Thyroid gland (tissue), 4 donors: ENCODE measurements at regions of chr16 and their contacts with region 1.

Region 1: GRCh38 chr16:51151961-51152663 is 1.0 kb upstream of the SALL1 start:
- DNase-seq: peak; percentile 93 to 95
- H3K4me3 ChIP-seq: peak overlapping the region; percentile 54 to 93 (median 90)
- H3K27ac ChIP-seq: peak overlapping the region; percentile 99
- H3K4me1 ChIP-seq: peaks cover under 1 to 2% of the 10 kb centered on the region in 2 donors
- H3K27me3 ChIP-seq: no peaks in the 10 kb centered on the region
- CTCF ChIP-seq: no peak
- POLR2A ChIP-seq: peak; percentile 51 to 98

Region 2: GRCh38 chr16:51756447-51757123 is 604.5 kb after region 1 on chr16:
- intact Hi-C with region 1: loop called (anchors 5 kb)
- DNase-seq: peak; percentile 48 to 53
- H3K4me3 ChIP-seq: peak overlapping the region in 1 of 3 donors; percentile 13
- H3K27ac ChIP-seq: peak overlapping the region; percentile 88 to 93 (median 90)
- H3K4me1 ChIP-seq: peaks cover 19 to 34% of the 10 kb centered on the region in 2 donors
- H3K27me3 ChIP-seq: no peaks in the 10 kb centered on the region
- CTCF ChIP-seq: peak in 2 of 6 experiments; percentile 24 to 36
- POLR2A ChIP-seq: no peak